Breast epithelium (tissue), 4 donors: ENCODE measurements at regions of chr6 and their contacts with region 1.

Region 1: DNA sequence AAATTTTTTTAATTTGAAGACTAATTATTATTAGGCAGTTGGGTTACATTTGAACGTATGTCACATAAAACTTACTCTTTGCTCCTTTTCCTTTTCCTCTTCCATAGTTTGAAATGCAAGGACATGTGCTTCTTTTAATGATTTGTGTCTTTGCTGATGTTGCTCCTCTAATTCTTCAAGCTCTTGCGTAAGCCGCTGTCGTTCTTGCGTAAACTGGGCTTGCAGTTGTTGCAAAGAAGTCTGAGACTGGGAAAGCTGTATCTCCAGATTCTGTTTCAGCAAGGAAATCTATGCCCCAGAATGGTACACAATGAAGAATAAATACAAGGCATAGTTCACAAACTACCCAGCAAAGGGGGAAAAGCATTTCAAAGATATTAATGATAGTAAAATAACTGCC is 45.1 kb upstream of the MCM9 start:
- DNase-seq: no peak
- H3K4me3 ChIP-seq: no peak overlapping the region
- H3K27ac ChIP-seq: no peak overlapping the region
- H3K4me1 ChIP-seq: no peaks in the 10 kb centered on the region
- H3K27me3 ChIP-seq: no peaks in the 10 kb centered on the region
- CTCF ChIP-seq: no peak
- POLR2A ChIP-seq: no peak

Region 2: GRCh38 chr6:118968416-118968815 is 11.6 kb before region 1 on chr6:
- intact Hi-C with region 1: loop called (anchors 1 kb)
- DNase-seq: no peak
- H3K4me3 ChIP-seq: no peak overlapping the region
- H3K27ac ChIP-seq: no peak overlapping the region
- H3K4me1 ChIP-seq: no peaks in the 10 kb centered on the region
- H3K27me3 ChIP-seq: no peaks in the 10 kb centered on the region
- CTCF ChIP-seq: peak in 1 of 3 donors; percentile 35
- POLR2A ChIP-seq: no peak

Region 3: GRCh38 chr6:119105282-119105681 is 125.2 kb after region 1 on chr6:
- intact Hi-C with region 1: loop called (anchors 10 kb)
- DNase-seq: no peak
- H3K4me3 ChIP-seq: no peak overlapping the region
- H3K27ac ChIP-seq: no peak overlapping the region
- H3K4me1 ChIP-seq: no peaks in the 10 kb centered on the region
- H3K27me3 ChIP-seq: no peaks in the 10 kb centered on the region
- CTCF ChIP-seq: no peak
- POLR2A ChIP-seq: no peak

Region 4: DNA sequence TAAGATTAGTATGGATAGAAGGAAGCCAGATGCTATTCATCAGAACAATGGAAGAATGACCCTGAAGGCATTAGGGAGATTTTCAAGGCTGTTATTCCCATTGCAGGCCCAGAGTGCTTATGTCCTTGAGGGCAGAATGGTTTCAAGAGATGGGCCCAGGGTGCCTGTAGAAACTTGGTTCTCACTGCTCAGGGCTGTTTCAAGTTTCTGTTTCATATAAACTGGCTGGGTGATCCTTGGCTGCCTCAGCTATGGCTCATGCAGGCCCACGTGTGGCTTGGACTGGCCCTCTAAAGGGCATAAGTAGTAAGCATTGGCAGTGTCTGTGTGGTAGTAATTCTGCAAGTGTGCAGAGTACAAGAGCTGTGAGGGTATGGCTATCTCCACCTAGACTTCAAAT is 910.4 kb after region 1 on chr6:
- intact Hi-C with region 1: no loop called
- DNase-seq: no peak
- H3K4me3 ChIP-seq: no peak overlapping the region
- H3K27ac ChIP-seq: no peak overlapping the region
- H3K4me1 ChIP-seq: no peaks in the 10 kb centered on the region
- H3K27me3 ChIP-seq: no peaks in the 10 kb centered on the region
- CTCF ChIP-seq: no peak
- POLR2A ChIP-seq: no peak